ENCODE measurements at regions of chr6 and their contacts with region 1.

Region 1: GRCh38 chr6:36302227-36302976 is 32.5 kb downstream of the PNPLA1 start:
- DNase-seq: peak; percentile 82
- H3K4me3 ChIP-seq: peak overlapping the region in 1 of 2 experiments; percentile 21; a peak in 1 of 4 replicates
- H3K27ac ChIP-seq: no peak overlapping the region
- H3K4me1 ChIP-seq: no peaks in the 10 kb centered on the region; a peak in 1 of 4 replicates
- H3K27me3 ChIP-seq: no peaks in the 10 kb centered on the region
- CTCF ChIP-seq: peak; percentile 96
- EP300 ChIP-seq: no peak
- RAD21 ChIP-seq: peak; percentile 77

Region 2: DNA sequence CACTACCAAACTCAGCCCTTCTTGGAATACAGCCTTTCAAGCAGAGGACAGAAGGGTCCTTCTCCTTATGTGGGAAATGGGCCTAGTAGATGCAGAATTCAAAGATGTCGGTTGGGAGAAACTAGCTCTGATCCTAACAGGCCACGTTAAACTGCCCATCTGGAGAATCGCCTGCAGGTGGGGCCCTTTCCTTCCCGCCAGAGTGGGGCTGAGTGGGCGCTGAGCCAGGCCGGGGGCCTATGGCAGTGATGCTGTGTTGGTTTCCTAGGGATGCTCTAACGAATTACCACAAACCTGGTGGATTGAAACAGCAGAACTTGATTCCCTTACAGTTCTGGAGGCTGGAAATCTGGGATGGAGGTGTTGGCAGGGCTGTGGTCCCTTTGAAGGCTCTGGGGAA is 163.0 kb before region 1 on chr6:
- CTCF ChIA-PET with region 1: interaction called, 10 read pairs
- POLR2A ChIA-PET with region 1: no interaction called
- DNase-seq: peak; percentile 79
- H3K4me3 ChIP-seq: no peak overlapping the region
- H3K27ac ChIP-seq: 0 out of 4 replicates have a peak overlapping the region, but pooled peaks of 1 of the 2 experiments have one; percentile 3
- H3K4me1 ChIP-seq: peaks cover 0 to 37% of the 10 kb centered on the region in 2 experiments; a peak in 1 of 4 replicates
- H3K27me3 ChIP-seq: no peaks in the 10 kb centered on the region
- CTCF ChIP-seq: peak; percentile 29; the same call in 1 of the 2 replicates
- EP300 ChIP-seq: no peak
- RAD21 ChIP-seq: peak; percentile 62

Region 3: GRCh38 chr6:36280467-36280866 is 21.9 kb before region 1 on chr6:
- CTCF ChIA-PET with region 1: interaction called, 161 read pairs
- POLR2A ChIA-PET with region 1: no interaction called
- DNase-seq: no peak
- H3K4me3 ChIP-seq: no peak overlapping the region
- H3K27ac ChIP-seq: no peak overlapping the region
- H3K4me1 ChIP-seq: peaks cover 0 to 6% of the 10 kb centered on the region in 2 experiments; a peak in 1 of 4 replicates
- H3K27me3 ChIP-seq: peaks cover 42% of the 10 kb centered on the region
- CTCF ChIP-seq: no peak
- EP300 ChIP-seq: no peak
- RAD21 ChIP-seq: no peak

Region 4: GRCh38 chr6:36314221-36315014 is 12.0 kb after region 1 on chr6:
- CTCF ChIA-PET with region 1: interaction called, 123 read pairs
- POLR2A ChIA-PET with region 1: no interaction called
- DNase-seq: no peak
- H3K4me3 ChIP-seq: no peak overlapping the region
- H3K27ac ChIP-seq: no peak overlapping the region
- H3K4me1 ChIP-seq: peaks cover 0 to 2% of the 10 kb centered on the region in 2 experiments; a peak in 1 of 4 replicates
- H3K27me3 ChIP-seq: peaks cover 12% of the 10 kb centered on the region; the same call in 1 of the 2 replicates
- CTCF ChIP-seq: no peak
- EP300 ChIP-seq: no peak
- RAD21 ChIP-seq: no peak

Region 5: GRCh38 chr6:36333931-36334725 is 31.7 kb after region 1 on chr6:
- CTCF ChIA-PET with region 1: interaction called, 29 read pairs
- POLR2A ChIA-PET with region 1: no interaction called
- DNase-seq: no peak
- H3K4me3 ChIP-seq: no peak overlapping the region
- H3K27ac ChIP-seq: no peak overlapping the region
- H3K4me1 ChIP-seq: no peaks in the 10 kb centered on the region
- H3K27me3 ChIP-seq: peaks cover 34% of the 10 kb centered on the region
- CTCF ChIP-seq: no peak
- EP300 ChIP-seq: no peak
- RAD21 ChIP-seq: no peak

Region 6: DNA sequence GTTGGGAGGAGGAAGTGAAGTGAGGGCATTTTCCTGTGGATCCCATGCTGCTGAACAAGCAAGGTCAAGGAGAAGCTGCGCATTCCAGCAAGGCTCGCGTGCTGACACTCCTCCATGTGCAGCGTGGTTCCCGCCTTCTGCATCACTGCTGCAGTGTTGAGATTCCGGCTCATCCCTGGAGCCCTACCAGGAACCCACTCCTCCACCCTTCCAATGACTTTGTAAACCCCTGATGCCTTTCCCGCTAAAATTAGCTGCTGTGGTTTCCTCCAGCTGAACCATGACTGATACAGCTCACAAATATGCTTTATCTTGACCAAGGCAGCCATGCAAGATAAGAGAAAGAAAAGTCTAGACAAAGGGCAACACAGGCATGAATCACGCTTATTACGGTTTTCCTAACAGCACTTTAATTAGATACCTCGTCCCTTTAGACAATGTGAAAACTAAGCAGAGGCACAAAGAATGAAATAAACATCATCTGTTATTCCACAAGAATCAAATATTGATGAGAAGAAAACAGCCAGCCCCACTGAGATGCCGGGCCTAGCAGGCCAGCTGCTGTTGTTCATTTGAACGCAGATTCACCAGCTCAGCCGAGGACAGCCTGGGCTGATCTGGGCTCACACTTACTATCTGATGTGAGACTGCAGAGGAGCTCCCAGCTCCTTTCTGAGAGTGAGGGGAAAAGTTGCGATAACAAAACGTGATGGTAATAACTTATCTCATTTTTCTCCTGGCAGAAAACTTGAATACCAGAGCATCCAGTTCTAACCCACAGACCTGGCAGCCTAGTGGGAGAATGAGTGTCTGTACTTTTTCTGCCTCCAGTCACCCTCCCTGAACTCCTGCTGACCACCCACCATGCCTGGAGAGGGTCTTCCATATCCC is 48.5 kb after region 1 on chr6:
- CTCF ChIA-PET with region 1: interaction called, 149 read pairs
- POLR2A ChIA-PET with region 1: no interaction called
- DNase-seq: no peak
- H3K4me3 ChIP-seq: no peak overlapping the region
- H3K27ac ChIP-seq: peak overlapping the region in 1 of 2 experiments; percentile 50; a peak in 2 of 4 replicates
- H3K4me1 ChIP-seq: peaks cover 6 to 9% of the 10 kb centered on the region in 2 experiments; a peak in 2 of 4 replicates
- H3K27me3 ChIP-seq: no peaks in the 10 kb centered on the region
- CTCF ChIP-seq: no peak
- EP300 ChIP-seq: no peak
- RAD21 ChIP-seq: no peak